ENCODE measurements at regions of chr19 and their contacts with region 1.

Region 1: DNA sequence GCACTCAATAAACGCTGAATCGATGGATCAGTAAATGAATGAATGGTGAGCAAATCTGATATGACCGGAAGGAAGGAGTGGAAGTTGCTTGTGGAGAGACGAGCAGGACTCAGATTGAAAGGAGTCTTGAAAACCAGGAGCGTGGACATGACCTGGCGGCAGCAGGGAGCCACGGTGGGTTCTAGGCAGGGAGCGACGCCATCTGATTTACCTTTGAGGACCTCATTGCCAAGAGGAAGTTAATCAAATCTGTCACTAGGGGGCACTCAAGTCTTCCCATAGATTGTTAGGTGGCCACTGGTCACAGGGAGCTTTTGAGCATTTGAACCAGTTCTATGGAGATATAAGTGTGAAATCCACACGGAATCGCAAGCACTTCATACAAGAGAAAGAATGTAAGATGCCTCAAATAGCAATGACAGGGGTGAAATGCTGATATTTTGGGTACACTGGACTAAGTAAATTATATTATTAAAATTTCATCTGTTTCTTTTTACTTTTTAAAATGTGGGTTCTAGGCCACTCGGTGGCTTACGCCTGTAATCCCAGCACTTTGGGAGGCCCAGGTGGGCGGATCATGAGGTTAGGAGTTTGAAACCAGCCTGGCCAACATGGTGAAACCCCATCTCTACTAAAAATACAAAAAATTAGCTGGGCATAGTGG is 9.2 kb upstream of the FBN3 start:
- DNase-seq: peak; percentile 51 to 81
- ATAC-seq: peak; percentile 77 to 81; a peak in 5 of 6 replicates
- H3K4me3 ChIP-seq: no peak overlapping the region
- H3K27ac ChIP-seq: no peak overlapping the region
- H3K4me1 ChIP-seq: peaks cover 10% of the 10 kb centered on the region
- CTCF ChIP-seq: peak; percentile 61
- EP300 ChIP-seq: no peak
- POLR2A ChIP-seq: no peak
- RAD21 ChIP-seq: peak; percentile 69 to 80

Region 2: GRCh38 chr19:7829561-7830271 is 328.8 kb before region 1 on chr19 and contains the start of gene EVI5L:
- CTCF ChIA-PET with region 1: no interaction called
- POLR2A ChIA-PET with region 1: no interaction called
- DNase-seq: peak; percentile 96 to 99
- ATAC-seq: peak; percentile 93 to 95
- H3K4me3 ChIP-seq: peak within 1 kb of the TSS; percentile 89
- H3K27ac ChIP-seq: peak within 1 kb of the TSS; percentile 67 to 85
- H3K4me1 ChIP-seq: peaks cover 10% of the 10 kb centered on the region; the same call in 1 of the 3 replicates
- CTCF ChIP-seq: no peak
- EP300 ChIP-seq: no peak
- POLR2A ChIP-seq: no peak
- RAD21 ChIP-seq: no peak
- polyA plus RNA-seq, gene EVI5L: 1.1 and 1.2 TPM in 2 replicates

Region 3: DNA sequence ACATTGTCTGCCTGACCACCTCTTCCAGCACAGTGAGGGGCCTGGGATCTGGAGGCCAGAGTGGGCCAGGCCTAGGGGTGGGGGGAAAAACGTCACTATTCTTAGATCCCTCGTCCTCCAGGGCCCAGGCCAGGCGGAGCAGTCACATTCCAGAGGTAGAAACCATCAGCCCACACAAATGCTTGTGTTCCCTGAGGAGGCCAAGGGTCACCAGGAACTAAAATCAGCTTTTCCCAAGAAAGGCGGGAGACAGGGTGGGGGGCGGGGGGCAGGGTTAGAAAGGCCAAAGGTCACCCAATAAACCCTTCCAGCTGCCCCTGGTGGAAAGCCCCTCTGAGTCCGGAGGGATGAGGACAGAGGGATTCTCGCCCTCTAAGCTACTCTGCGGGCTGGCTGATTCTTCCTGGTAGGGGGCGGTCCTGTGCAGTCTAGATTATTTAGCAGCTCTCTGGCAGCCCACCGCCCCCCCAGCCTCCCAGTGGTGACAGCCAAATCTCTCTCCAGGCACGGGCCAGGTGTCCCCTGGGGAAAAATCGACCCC is 129.5 kb before region 1 on chr19:
- CTCF ChIA-PET with region 1: no interaction called
- POLR2A ChIA-PET with region 1: no interaction called
- DNase-seq: no peak
- ATAC-seq: peak in 1 of 2 experiments; percentile 29; a peak in 1 of 6 replicates
- H3K4me3 ChIP-seq: no peak overlapping the region
- H3K27ac ChIP-seq: no peak overlapping the region
- H3K4me1 ChIP-seq: no peaks in the 10 kb centered on the region
- CTCF ChIP-seq: no peak
- EP300 ChIP-seq: no peak
- POLR2A ChIP-seq: no peak
- RAD21 ChIP-seq: no peak

Region 4: DNA sequence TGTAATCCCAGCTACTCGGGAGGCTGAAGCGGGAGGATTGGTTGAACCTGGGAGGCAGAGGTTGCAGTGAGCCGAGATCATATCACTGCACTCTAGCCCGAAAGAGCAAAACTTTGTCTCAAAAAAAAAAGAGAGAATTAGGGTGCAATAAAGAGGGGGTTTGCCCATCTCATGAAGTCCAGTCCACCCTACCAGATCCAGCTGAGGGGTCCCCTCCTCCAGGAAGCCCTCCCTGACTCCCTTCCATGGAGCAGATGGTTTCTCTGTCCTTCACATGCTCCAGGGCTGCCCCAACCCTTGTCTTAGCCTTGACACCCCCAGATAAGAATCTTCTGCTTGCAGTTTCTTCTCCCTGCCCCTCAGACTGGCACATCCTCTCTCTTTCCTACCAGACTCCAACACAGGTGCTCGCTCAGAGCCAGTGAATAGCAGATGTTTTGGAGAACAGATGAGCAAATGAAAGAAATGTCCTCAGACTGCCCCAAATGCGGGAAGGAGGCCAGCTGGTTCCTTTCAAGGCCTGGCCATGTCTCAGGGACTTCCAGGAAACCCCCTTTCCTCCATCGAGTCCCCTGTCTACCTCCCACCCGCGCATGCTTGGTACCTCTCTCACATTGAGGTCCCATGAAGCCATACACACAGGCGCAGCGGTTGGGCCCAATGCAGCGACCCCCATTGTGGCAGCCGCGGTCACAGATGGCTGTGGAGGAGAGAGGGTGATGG is 14.1 kb before region 1 on chr19:
- CTCF ChIA-PET with region 1: interaction called, 10 read pairs
- POLR2A ChIA-PET with region 1: no interaction called
- DNase-seq: no peak
- ATAC-seq: no peak
- H3K4me3 ChIP-seq: no peak overlapping the region
- H3K27ac ChIP-seq: no peak overlapping the region
- H3K4me1 ChIP-seq: peaks cover 4% of the 10 kb centered on the region; the same call in 1 of the 3 replicates
- CTCF ChIP-seq: no peak
- EP300 ChIP-seq: no peak
- POLR2A ChIP-seq: no peak
- RAD21 ChIP-seq: no peak

Region 5: GRCh38 chr19:8252922-8253589 is 94.5 kb after region 1 on chr19:
- CTCF ChIA-PET with region 1: interaction called, 19 read pairs
- POLR2A ChIA-PET with region 1: interaction called, 4 read pairs
- DNase-seq: peak; percentile 68 to 74
- ATAC-seq: peak; percentile 87 to 93
- H3K4me3 ChIP-seq: no peak overlapping the region
- H3K27ac ChIP-seq: no peak overlapping the region
- H3K4me1 ChIP-seq: no peaks in the 10 kb centered on the region
- CTCF ChIP-seq: peak; percentile 80
- EP300 ChIP-seq: no peak
- POLR2A ChIP-seq: no peak
- RAD21 ChIP-seq: peak; percentile 94 to 95